GM23248 (cell line): ENCODE measurements at regions of chr1 and their contacts with region 1.

Region 1: GRCh38 chr1:94801919-94802546 is 18.1 kb upstream of the SLC44A3 start:
- DNase-seq: peak; percentile 91
- H3K4me3 ChIP-seq: peak overlapping the region; percentile 54
- H3K27ac ChIP-seq: peak overlapping the region; percentile 23
- H3K4me1 ChIP-seq: peaks cover 55% of the 10 kb centered on the region
- H3K27me3 ChIP-seq: no peaks in the 10 kb centered on the region

Region 2: GRCh38 chr1:94045465-94046056 is 756.5 kb before region 1 on chr1:
- in situ Hi-C with region 1: loop called (anchors 25 kb)
- DNase-seq: peak; percentile 98
- H3K4me3 ChIP-seq: peak overlapping the region; percentile 36
- H3K27ac ChIP-seq: peak overlapping the region; percentile 37
- H3K4me1 ChIP-seq: peaks cover 38% of the 10 kb centered on the region
- H3K27me3 ChIP-seq: no peaks in the 10 kb centered on the region

Region 3: DNA sequence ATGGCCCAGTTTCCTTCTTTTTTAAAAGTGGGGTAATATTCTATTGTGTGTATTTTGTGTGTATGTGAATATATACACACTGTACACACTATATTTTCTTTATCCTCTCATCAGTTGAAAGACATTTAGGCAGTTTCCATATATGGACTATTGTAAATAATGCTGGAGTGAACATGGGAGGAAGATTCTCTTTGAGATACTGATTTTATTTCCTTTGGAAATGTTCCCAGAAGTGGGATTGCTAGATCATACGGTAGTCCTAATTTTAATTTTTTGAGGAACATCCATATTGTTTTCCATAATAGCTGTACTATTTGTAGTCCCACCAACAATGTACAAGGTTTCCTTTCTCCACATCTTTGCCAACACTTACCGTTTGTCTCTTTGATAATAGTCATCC is 311.5 kb before region 1 on chr1:
- in situ Hi-C with region 1: loop called (anchors 10 kb)
- DNase-seq: no peak
- H3K4me3 ChIP-seq: no peak overlapping the region
- H3K27ac ChIP-seq: no peak overlapping the region
- H3K4me1 ChIP-seq: no peaks in the 10 kb centered on the region
- H3K27me3 ChIP-seq: no peaks in the 10 kb centered on the region

Region 4: DNA sequence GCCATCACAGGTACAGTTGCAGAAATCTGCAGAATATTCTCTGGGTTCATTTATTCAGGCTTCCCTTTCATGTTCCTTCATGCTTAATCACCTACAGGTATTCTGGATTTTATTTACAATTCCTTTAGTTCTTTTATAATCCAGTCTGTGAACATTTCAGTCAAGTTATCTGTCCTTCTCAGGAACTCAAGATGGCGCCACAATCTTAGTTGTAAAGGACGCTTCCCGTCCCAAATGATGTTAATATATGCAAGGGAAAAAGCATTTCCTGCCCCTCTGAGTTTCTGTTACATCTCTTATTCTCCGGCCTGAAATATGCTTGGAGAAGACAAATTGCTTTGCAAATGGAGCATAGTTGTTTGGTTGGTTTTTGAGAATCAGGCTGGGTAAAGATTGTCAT is 279.7 kb before region 1 on chr1:
- in situ Hi-C with region 1: loop called (anchors 5 kb)
- DNase-seq: peak; percentile 83
- H3K4me3 ChIP-seq: no peak overlapping the region
- H3K27ac ChIP-seq: no peak overlapping the region
- H3K4me1 ChIP-seq: peaks cover 20% of the 10 kb centered on the region
- H3K27me3 ChIP-seq: no peaks in the 10 kb centered on the region

Region 5: DNA sequence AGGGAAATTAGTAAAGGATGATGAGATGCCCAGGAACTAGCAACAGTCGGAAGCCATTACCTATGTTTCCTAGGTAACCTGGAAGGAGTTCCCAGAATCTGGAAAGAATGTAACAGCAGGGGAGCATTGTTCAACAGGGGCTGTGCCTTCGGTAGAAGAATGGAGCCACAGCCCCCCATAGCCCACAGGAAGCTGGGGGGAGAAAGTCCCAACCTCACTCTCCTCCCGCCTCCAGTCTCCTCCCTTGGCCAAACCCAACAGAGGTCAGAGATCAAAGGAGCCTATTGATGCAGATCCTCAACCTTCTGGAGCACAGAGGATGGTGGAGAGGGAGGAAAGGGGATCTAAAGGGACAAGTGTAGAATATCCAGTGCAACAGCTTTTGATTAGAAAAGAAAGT is 113.4 kb before region 1 on chr1:
- in situ Hi-C with region 1: no loop called
- DNase-seq: no peak
- H3K4me3 ChIP-seq: no peak overlapping the region
- H3K27ac ChIP-seq: no peak overlapping the region
- H3K4me1 ChIP-seq: peaks cover 21% of the 10 kb centered on the region
- H3K27me3 ChIP-seq: no peaks in the 10 kb centered on the region

Region 6: DNA sequence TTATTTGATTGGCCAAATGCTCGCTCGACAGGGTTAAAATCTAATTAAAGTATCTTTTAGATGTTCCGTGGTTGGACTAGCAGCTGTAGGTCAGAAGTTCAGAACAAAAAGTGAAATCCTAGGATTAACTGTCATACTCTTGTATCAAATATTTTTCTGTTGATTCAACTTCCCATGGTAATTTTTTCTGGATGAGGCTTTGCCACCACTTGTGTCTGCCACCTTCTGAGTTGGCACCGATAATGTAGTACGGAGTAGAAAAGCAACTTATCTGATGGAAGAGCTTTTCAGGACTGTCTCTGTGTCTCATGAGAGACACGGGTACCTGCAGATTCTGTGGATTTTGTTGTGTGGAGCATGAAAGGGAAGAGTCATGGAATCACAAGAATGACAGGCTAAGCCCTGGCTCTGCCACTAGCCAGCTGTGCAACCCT is 169.5 kb after region 1 on chr1:
- in situ Hi-C with region 1: no loop called
- DNase-seq: peak; percentile 81
- H3K4me3 ChIP-seq: peak overlapping the region; percentile 25
- H3K27ac ChIP-seq: peak overlapping the region; percentile 48
- H3K4me1 ChIP-seq: peaks cover 45% of the 10 kb centered on the region
- H3K27me3 ChIP-seq: no peaks in the 10 kb centered on the region